ENCODE measurements at regions of chr2 and their contacts with region 1.

Region 1: GRCh38 chr2:219530048-219530963 is 13.3 kb downstream of the CHPF start:
- DNase-seq: peak; percentile 86 to 93
- H3K4me3 ChIP-seq: no peak overlapping the region
- H3K4me3 Mint-ChIP-seq: no peak overlapping the region
- H3K27ac Mint-ChIP-seq: no peak overlapping the region
- H3K4me1 ChIP-seq: peaks cover 10% of the 10 kb centered on the region
- H3K4me1 Mint-ChIP-seq: peaks cover 21% of the 10 kb centered on the region
- H3K27me3 ChIP-seq: no peaks in the 10 kb centered on the region; the same call in 1 of the 2 replicates
- H3K27me3 Mint-ChIP-seq: peaks cover 25% of the 10 kb centered on the region
- CTCF ChIP-seq: peak; percentile 95 to 97

Region 2: DNA sequence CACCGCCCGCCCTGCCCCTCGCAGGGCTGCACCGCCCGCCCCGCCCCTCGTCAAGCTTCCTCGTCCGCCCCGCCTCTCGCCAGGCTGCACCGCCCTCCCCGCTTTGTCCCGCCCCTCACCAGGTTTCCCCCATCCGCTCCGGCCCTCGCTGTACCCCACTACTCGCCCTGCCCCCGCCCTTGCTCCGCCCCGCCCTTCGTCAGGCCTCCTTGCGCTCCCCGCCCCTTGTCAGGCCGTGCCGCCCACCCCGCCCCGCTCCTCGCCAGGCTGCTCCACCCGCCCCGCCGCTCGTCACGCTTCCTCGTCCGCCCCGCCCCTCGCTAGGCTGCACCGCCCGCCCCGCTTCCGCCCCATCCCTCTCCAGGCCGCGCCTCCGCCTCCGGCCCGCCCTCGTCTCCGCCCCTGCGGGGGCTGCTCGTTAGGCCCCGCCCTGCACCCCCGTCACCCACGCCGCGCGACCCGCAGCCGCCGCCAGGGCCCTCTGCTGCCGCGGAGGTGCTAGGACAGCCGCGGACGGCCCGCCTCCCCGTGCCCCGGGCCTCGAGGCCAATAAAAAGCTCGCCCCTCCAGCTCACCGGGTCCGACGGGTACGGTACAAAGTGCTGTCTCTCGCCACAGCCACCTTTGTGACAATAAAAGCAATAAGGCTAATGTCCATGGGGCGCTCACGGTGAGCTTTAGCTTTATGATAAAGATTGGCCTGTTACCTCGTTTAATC is 142.0 kb before region 1 on chr2:
- CTCF ChIA-PET with region 1: interaction called, 24 read pairs
- POLR2A ChIA-PET with region 1: interaction called, 5 read pairs
- intact Hi-C with region 1: no loop called
- DNase-seq: peak; percentile 98
- H3K4me3 ChIP-seq: peak overlapping the region; percentile 42
- H3K4me3 Mint-ChIP-seq: peak overlapping the region; percentile 96
- H3K27ac Mint-ChIP-seq: peak overlapping the region; percentile 94
- H3K4me1 ChIP-seq: peaks cover 15% of the 10 kb centered on the region
- H3K4me1 Mint-ChIP-seq: no peaks in the 10 kb centered on the region
- H3K27me3 ChIP-seq: no peaks in the 10 kb centered on the region
- H3K27me3 Mint-ChIP-seq: no peaks in the 10 kb centered on the region
- CTCF ChIP-seq: peak; percentile 32 to 60

Region 3: GRCh38 chr2:219447242-219448098 is 82.8 kb before region 1 on chr2:
- CTCF ChIA-PET with region 1: interaction called, 10 read pairs
- POLR2A ChIA-PET with region 1: no interaction called
- intact Hi-C with region 1: no loop called
- DNase-seq: no peak
- H3K4me3 ChIP-seq: no peak overlapping the region
- H3K4me3 Mint-ChIP-seq: no peak overlapping the region
- H3K27ac Mint-ChIP-seq: no peak overlapping the region
- H3K4me1 ChIP-seq: 0 out of 2 replicates have a peak, but pooled peaks cover 3% of the 10 kb centered on the region
- H3K4me1 Mint-ChIP-seq: no peaks in the 10 kb centered on the region
- H3K27me3 ChIP-seq: no peaks in the 10 kb centered on the region
- H3K27me3 Mint-ChIP-seq: no peaks in the 10 kb centered on the region
- CTCF ChIP-seq: no peak

Region 4: GRCh38 chr2:219475697-219476651 is 54.3 kb before region 1 on chr2:
- CTCF ChIA-PET with region 1: interaction called, 8 read pairs
- POLR2A ChIA-PET with region 1: interaction called, 4 read pairs
- intact Hi-C with region 1: loop called (anchors 1 kb)
- DNase-seq: peak; percentile 74 to 87
- H3K4me3 ChIP-seq: no peak overlapping the region
- H3K4me3 Mint-ChIP-seq: peak overlapping the region; percentile 10
- H3K27ac Mint-ChIP-seq: no peak overlapping the region
- H3K4me1 ChIP-seq: no peaks in the 10 kb centered on the region
- H3K4me1 Mint-ChIP-seq: no peaks in the 10 kb centered on the region
- H3K27me3 ChIP-seq: no peaks in the 10 kb centered on the region
- H3K27me3 Mint-ChIP-seq: no peaks in the 10 kb centered on the region
- CTCF ChIP-seq: peak; percentile 91 to 94

Region 5: DNA sequence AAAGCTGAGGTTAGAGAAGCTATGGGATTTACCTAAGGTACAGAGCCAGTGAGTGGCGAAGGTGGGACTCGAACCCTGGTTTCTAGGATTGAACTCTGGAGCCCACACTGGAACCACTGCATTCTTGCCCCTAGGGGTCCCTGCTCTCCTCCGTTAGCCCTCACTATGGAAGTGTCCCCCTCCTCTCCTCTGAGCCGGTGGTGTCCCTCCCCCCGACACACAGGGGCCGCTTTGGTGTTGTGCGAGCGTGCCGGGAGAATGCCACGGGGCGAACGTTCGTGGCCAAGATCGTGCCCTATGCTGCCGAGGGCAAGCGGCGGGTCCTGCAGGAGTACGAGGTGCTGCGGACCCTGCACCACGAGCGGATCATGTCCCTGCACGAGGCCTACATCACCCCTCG is 40.1 kb before region 1 on chr2:
- CTCF ChIA-PET with region 1: interaction called, 243 read pairs
- POLR2A ChIA-PET with region 1: no interaction called
- intact Hi-C with region 1: loop called (anchors 1 kb)
- DNase-seq: no peak
- H3K4me3 ChIP-seq: no peak overlapping the region
- H3K4me3 Mint-ChIP-seq: no peak overlapping the region
- H3K27ac Mint-ChIP-seq: no peak overlapping the region
- H3K4me1 ChIP-seq: peaks cover 3% of the 10 kb centered on the region; the same call in 1 of the 2 replicates
- H3K4me1 Mint-ChIP-seq: no peaks in the 10 kb centered on the region
- H3K27me3 ChIP-seq: peaks cover under 1% of the 10 kb centered on the region
- H3K27me3 Mint-ChIP-seq: peaks cover 20% of the 10 kb centered on the region
- CTCF ChIP-seq: no peak

Region 6: GRCh38 chr2:219509780-219510511 is 20.4 kb before region 1 on chr2:
- CTCF ChIA-PET with region 1: interaction called, 80 read pairs
- POLR2A ChIA-PET with region 1: interaction called, 3 read pairs
- intact Hi-C with region 1: loop called (anchors 1 kb)
- DNase-seq: peak; percentile 80 to 81
- H3K4me3 ChIP-seq: peak overlapping the region; percentile 64
- H3K4me3 Mint-ChIP-seq: peak overlapping the region; percentile 80
- H3K27ac Mint-ChIP-seq: no peak overlapping the region
- H3K4me1 ChIP-seq: peaks cover 12% of the 10 kb centered on the region
- H3K4me1 Mint-ChIP-seq: peaks cover 18% of the 10 kb centered on the region
- H3K27me3 ChIP-seq: peaks cover 5% of the 10 kb centered on the region; the same call in 1 of the 2 replicates
- H3K27me3 Mint-ChIP-seq: peaks cover 20% of the 10 kb centered on the region
- CTCF ChIP-seq: peak; percentile 68 to 90

Region 7: DNA sequence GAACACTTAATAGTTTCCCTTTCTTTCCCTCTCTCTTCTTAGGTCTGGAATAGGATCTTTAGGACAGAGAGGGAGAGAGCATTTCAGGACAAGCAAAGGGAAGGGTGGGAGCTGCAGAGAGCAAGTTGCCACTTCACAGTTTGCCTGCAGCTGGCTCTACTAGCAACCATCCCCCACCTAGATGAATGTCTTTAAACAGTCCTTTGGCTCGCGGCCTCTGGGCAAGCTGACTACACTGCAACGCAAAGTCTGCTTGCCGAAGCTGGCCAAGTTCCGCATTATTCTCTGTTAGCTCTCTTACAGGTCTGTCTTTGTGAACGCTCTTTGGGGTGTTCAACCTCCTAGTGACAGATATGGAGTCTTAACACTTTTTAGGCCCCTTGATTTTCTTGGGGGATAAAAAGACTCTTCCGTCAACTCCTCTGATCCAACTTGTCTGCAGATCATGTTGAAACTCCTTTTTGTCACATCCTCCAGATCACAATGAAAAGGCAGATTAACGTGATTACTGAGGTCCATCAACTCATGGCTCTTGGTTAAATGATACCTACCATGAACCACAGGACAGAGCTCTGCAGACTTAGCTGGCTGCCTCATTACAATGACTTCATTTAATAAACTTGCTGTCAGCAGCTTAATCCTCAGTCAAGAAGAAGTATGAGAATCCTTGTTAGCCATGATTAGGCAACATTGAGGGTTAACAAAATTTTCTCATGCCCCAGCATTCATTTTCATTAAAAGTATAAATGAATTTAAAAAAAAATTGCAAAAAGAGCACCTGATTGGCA is 171.7 kb after region 1 on chr2:
- CTCF ChIA-PET with region 1: no interaction called
- POLR2A ChIA-PET with region 1: no interaction called
- intact Hi-C with region 1: no loop called
- DNase-seq: no peak
- H3K4me3 ChIP-seq: no peak overlapping the region
- H3K4me3 Mint-ChIP-seq: no peak overlapping the region
- H3K27ac Mint-ChIP-seq: no peak overlapping the region
- H3K4me1 ChIP-seq: peaks cover 6% of the 10 kb centered on the region
- H3K4me1 Mint-ChIP-seq: peaks cover 8% of the 10 kb centered on the region
- H3K27me3 ChIP-seq: no peaks in the 10 kb centered on the region
- H3K27me3 Mint-ChIP-seq: peaks cover 6% of the 10 kb centered on the region
- CTCF ChIP-seq: no peak

Measured in Caco-2 (cell line).